Posterior vena cava (tissue), 2 donors: ENCODE measurements at regions of chr5 and their contacts with region 1.

Region 1: GRCh38 chr5:38697013-38697412 is 140.6 kb upstream of the LIFR start:
- DNase-seq: no peak

Region 2: DNA sequence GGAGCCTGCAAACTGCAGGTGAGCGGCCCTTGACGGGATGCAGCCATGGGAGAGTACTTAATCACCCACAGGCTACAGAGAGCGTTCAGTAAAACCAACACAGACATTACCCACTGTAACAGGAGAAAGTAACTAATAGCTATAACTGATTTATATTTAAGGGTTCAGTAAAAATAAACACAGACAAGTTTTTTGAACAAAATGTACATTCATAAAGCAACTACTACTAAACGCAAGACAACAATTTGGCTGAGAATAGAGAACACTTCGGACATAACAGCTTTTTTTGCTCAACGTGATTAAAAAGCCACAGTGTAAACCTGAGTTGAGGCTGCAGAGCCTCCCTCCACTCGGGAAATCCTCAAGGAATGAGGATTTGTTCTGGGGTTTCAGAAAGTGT is 202.2 kb before region 1 on chr5:
- intact Hi-C with region 1: no loop called
- DNase-seq: no peak

Region 3: DNA sequence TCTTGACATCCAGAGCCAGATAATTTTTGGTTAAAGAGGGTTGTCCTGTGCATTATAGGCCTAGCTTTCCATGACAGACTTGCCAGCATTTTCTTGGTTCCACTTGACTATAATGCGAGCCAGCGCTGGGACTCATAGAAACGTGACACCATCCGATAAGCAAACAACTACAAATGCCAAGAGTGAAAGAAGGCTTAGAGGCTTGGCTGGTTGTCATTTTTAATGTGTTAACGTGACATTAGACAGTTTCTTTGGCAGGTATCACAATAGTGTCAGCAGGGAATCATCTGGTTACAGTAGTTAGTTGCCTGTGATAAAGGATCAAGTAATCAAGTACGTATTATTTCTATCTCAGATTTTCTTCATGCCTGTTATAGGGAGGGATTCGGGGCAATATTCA is 120.6 kb before region 1 on chr5:
- intact Hi-C with region 1: no loop called
- DNase-seq: no peak

Region 4: GRCh38 chr5:38650946-38651345 is 46.1 kb before region 1 on chr5:
- intact Hi-C with region 1: no loop called
- DNase-seq: no peak

Region 5: DNA sequence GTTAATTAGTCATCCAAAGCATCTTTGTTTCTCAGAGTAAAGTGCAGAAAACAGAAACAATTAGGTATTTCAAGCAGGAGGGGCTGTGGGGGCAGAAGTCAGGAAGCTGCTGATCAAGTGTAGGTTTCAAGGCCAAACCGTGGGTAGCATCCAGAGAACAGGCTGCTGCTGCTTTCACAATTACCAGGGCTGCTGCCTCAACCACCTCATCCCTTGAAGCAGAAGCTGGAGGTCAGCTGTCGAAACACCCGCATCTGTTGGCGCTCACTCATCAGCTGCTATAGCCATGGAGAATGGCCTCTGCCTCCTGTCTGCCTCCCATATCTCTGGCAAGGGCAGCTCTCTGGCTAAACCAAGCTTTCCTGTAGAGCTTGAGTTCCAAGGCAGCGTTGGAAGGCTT is 25.9 kb after region 1 on chr5:
- intact Hi-C with region 1: loop called in 1 of 2 experiments (anchors 1 kb)
- DNase-seq: no peak

Region 6: DNA sequence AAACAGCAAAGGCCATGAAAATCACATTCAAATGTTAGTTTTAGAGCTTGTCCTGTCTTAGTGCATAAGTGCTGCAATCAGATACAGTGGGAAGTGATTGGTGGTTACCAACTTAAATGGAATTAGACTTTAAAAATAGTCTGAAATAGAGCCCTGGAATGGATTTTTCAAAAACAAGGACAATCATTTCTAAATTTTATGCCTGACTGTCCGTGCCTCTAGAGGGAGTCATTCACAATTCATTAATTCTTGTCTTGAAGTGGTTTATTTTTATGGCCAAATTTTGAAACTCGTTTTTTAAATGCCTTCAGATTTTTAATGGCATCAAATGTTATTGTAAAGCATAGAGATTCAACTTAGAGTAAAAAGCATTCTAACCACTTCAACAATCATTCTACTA is 1289.6 kb after region 1 on chr5:
- intact Hi-C with region 1: no loop called
- DNase-seq: no peak